Prostate gland (tissue), 2 donors: ENCODE measurements at regions of chr10 and their contacts with region 1.

Region 1: DNA sequence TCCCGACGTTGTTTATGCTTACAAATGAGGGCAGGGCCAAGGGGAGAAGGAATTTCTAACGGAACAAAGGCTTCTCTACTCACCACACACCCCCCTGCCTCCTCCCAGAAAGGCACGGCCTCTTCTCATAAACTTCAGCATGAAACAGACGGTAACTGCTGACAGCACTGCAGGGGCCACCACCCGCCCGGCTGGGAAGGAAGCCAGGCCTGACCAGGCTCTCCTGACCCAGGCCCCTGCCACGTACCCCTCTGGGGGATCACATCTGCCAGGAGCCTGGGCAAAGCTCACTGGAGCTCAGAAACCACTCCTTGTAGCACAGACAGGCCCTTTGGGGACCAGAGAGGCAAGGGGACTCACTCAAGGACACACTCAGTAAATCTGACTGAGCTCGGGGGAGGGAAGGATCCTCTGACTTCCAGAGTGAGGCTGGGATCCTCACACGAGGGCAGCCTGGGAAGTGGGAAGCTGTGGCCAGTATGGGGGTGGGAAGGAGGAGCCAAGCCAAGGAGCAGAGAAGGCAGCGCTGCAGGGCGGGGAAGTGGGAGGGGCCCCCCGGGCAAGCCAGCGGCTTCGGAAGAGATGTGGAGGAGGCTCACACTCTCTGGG is 46.1 kb downstream of the ZCCHC24 start:
- DNase-seq: peak; percentile 68
- H3K4me3 ChIP-seq: no peak overlapping the region
- H3K27ac ChIP-seq: peak overlapping the region; percentile 80 to 88
- H3K4me1 ChIP-seq: peaks cover 35% of the 10 kb centered on the region
- H3K27me3 ChIP-seq: no peaks in the 10 kb centered on the region
- CTCF ChIP-seq: no peak
- POLR2A ChIP-seq: no peak

Region 2: DNA sequence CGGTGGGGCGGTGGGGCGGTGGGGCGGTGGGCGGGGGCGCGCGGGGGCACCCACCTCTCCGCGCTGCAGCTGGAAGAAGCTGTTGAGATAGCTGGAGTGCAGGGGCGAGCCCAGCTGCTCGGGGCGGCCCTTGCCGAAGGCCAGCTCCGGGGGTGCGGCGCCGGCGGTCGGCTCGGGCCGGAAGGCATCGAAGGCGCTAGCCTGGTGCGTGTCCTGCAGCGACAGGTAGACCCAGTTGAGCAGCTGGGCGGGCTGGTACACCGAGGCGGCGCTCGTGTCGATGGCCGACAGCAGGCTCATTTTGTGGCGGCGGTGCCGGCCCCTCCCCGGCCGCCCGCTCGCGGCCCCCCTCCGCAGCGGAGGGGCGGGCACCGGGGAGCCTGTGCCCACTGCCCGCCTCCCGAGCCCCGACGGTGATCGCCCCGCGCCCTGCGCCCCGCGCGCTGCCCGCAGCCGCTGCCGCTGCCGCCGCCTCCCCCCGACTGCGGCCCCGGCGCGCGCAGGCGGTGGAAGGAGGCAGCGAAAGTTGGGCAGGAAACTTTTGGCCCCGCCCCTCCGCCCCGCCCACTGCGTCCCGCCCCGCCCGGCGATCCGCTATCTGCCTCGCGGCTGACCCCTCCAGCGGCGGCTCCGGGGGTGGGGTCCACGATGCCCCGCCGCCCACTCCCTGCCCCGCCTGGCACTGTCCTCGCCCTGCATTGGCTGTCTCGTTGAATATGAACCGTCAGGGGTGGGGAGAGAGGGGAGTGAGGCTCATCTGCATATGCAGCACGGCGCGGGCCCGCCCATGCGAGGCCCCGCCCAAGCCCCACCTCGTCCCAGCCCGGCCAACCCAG is 46.0 kb after region 1 on chr10 and contains the start of gene ZCCHC24:
- intact Hi-C with region 1: loop called (anchors 2 kb)
- DNase-seq: peak; percentile 97
- H3K4me3 ChIP-seq: peak within 1 kb of the TSS; percentile 84 to 89
- H3K27ac ChIP-seq: peak within 1 kb of the TSS; percentile 75 to 87
- H3K4me1 ChIP-seq: peaks cover 2% of the 10 kb centered on the region
- H3K27me3 ChIP-seq: no peaks in the 10 kb centered on the region
- CTCF ChIP-seq: peak in 1 of 4 experiments; percentile 13
- POLR2A ChIP-seq: peak; percentile 23
- total RNA-seq, gene ZCCHC24: 20.8 to 51.2 TPM

Region 3: DNA sequence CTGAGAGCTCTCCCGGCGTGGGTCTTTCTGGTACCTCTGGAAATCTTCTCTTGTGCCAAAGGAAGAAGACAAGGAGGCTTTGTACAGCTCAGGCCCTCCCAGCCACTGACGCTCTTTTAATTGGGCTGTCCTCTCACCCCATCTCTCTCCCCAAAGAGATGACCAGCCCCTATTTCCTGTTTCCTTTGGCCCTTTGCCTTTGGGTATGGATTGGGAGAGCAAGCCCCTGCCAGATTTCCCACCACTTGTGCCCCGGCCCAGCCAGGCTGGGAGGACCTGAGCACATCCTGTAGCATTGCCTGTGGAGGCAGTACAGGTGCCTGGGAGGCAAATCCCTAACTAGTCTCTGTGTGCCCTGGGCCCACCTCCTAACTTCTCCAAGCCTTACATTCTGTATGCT is 727.5 kb after region 1 on chr10:
- intact Hi-C with region 1: no loop called
- DNase-seq: no peak
- H3K4me3 ChIP-seq: no peak overlapping the region
- H3K27ac ChIP-seq: no peak overlapping the region
- H3K4me1 ChIP-seq: no peaks in the 10 kb centered on the region
- H3K27me3 ChIP-seq: no peaks in the 10 kb centered on the region
- CTCF ChIP-seq: no peak
- POLR2A ChIP-seq: no peak